Sciatic nerve (tissue), 2 donors: ENCODE measurements at regions of chr1 and their contacts with region 1.

Region 1: DNA sequence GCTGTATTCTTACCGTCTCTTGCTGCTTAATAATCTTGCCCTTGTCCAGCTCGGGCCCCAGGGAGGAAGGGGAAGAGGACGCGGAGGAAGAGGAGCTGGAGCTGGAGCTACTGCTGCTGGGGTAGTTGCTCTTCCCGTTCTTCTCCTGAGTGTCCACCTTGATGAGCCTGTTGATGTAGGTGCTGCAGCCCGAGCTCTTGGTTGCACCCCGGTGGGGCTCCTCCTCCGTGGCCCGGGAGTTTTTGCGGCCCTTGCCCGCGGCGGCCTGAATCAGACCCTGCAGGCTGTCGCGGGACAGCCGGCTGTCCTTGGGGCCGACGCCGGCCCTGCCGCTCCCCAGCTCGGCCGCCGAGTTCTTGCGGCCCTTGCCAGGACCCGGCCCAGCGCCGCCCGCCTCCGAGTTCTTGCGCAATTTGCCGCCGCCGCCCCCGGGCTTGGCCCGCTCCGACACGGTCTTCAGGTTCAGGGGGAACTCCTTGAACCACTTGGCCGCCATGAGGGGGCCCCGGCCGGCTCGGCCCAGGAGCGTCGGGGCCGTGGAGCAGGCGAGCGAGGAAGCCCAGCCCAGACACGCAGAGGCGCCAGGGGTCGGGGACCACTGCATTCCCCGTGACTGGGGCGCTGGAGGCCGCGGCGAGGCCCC is 475 bp upstream of the TDRD10 start:
- DNase-seq: peak; percentile 78
- ATAC-seq: peak; percentile 84

Region 2: GRCh38 chr1:154539507-154540483 is 38.3 kb after region 1 on chr1:
- intact Hi-C with region 1: loop called (anchors 2 kb)
- DNase-seq: no peak
- ATAC-seq: no peak